ENCODE measurements at regions of chr1 and their contacts with region 1.

Region 1: GRCh38 chr1:174800216-174800851 is 199.4 kb upstream of the CACYBP start:
- DNase-seq: peak in 1 of 5 donors; percentile 47
- H3K4me3 ChIP-seq: peak overlapping the region; percentile 54 to 73
- H3K4me3 Mint-ChIP-seq: no peak overlapping the region
- H3K27ac ChIP-seq: peak overlapping the region; percentile 62
- H3K27ac Mint-ChIP-seq: no peak overlapping the region
- H3K4me1 ChIP-seq: peaks cover 24% of the 10 kb centered on the region
- H3K4me1 Mint-ChIP-seq: peaks cover 0 to 11% (median 9%) of the 10 kb centered on the region in 4 donors
- H3K27me3 ChIP-seq: no peaks in the 10 kb centered on the region
- H3K27me3 Mint-ChIP-seq: no peaks in the 10 kb centered on the region

Region 2: GRCh38 chr1:174692313-174692712 is 108.0 kb before region 1 on chr1:
- CTCF ChIA-PET with region 1: no interaction called
- POLR2A ChIA-PET with region 1: no interaction called
- intact Hi-C with region 1: no loop called
- DNase-seq: no peak
- H3K4me3 ChIP-seq: no peak overlapping the region
- H3K4me3 Mint-ChIP-seq: no peak overlapping the region
- H3K27ac ChIP-seq: no peak overlapping the region
- H3K27ac Mint-ChIP-seq: no peak overlapping the region
- H3K4me1 ChIP-seq: no peaks in the 10 kb centered on the region
- H3K4me1 Mint-ChIP-seq: no peaks in the 10 kb centered on the region
- H3K27me3 ChIP-seq: no peaks in the 10 kb centered on the region
- H3K27me3 Mint-ChIP-seq: no peaks in the 10 kb centered on the region

Region 3: GRCh38 chr1:174703309-174703708 is 97.0 kb before region 1 on chr1:
- CTCF ChIA-PET with region 1: no interaction called
- POLR2A ChIA-PET with region 1: no interaction called
- intact Hi-C with region 1: no loop called
- DNase-seq: no peak
- H3K4me3 ChIP-seq: no peak overlapping the region
- H3K4me3 Mint-ChIP-seq: no peak overlapping the region
- H3K27ac ChIP-seq: no peak overlapping the region
- H3K27ac Mint-ChIP-seq: no peak overlapping the region
- H3K4me1 ChIP-seq: no peaks in the 10 kb centered on the region
- H3K4me1 Mint-ChIP-seq: no peaks in the 10 kb centered on the region
- H3K27me3 ChIP-seq: no peaks in the 10 kb centered on the region
- H3K27me3 Mint-ChIP-seq: no peaks in the 10 kb centered on the region

Region 4: DNA sequence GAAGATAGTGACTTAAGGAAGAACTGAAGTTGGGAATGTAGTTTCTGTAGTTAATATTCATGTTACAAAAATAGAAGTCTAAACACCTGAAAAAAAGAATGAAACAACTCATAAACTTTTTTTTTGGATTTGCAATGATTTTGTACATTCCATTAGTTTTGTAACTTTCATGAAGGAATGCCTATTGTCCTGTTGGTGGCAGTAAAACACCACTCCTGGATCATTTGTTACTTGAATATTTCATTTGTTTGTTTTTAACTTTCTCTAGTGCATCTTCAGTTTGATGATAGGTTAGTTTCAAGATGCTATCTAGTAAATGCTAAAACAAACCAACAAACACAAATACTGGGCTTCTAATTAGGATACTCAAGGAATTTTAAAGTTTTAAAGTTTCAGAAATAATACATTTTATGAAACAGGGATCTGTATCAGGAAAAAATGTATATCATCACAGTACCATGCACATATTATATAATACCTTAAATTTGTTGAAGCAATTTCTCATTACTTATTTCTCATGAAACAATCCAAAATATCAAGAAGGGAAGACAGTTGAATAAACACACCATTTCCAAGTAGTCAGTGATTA is 30.3 kb before region 1 on chr1:
- CTCF ChIA-PET with region 1: no interaction called
- POLR2A ChIA-PET with region 1: no interaction called
- intact Hi-C with region 1: loop called (anchors 2 kb)
- DNase-seq: peak; percentile 34 to 55 (median 44)
- H3K4me3 ChIP-seq: no peak overlapping the region
- H3K4me3 Mint-ChIP-seq: no peak overlapping the region
- H3K27ac ChIP-seq: no peak overlapping the region
- H3K27ac Mint-ChIP-seq: no peak overlapping the region
- H3K4me1 ChIP-seq: no peaks in the 10 kb centered on the region
- H3K4me1 Mint-ChIP-seq: peaks cover 0 to 5% (median 2%) of the 10 kb centered on the region in 4 donors
- H3K27me3 ChIP-seq: no peaks in the 10 kb centered on the region
- H3K27me3 Mint-ChIP-seq: no peaks in the 10 kb centered on the region

Region 5: DNA sequence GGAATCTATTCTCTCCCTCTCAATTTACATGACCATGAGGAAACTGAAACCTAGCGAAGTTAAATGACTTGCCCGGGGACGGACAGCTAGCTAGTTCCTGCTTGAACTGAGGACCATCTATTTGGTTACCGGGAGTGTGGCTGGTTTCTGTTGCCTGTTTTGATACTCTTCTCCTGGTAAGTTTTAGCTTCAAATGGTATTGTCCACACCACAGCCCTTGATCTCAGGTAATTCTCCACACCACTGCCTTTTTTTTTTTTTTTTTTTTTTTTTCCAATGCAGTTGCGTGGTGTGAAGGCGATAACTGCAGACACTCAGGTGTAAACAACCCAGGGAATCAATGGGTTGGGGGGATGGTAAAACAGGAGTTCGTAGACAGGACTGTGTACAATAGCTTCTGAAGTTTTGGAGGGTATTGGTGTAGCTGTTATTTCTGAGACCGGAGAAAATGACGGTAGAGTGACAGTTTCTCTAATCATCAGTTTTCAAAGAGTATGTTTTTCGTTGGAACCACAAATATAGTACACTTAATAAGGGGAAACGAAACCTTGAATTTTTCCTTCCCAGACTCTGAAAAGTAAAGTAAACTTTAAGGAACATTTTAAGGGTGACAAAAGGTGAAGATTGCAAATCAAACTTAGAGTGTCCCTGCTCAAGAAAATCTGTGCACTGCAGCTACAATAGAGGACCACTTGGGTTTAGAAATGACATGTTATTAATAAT is 74.2 kb after region 1 on chr1:
- CTCF ChIA-PET with region 1: interaction called, 3 read pairs
- POLR2A ChIA-PET with region 1: interaction called, 20 read pairs
- intact Hi-C with region 1: no loop called
- DNase-seq: no peak
- H3K4me3 ChIP-seq: no peak overlapping the region
- H3K4me3 Mint-ChIP-seq: peak overlapping the region; percentile 78 to 89 (median 84)
- H3K27ac ChIP-seq: no peak overlapping the region
- H3K27ac Mint-ChIP-seq: peak overlapping the region; percentile 62 to 88 (median 77)
- H3K4me1 ChIP-seq: peaks cover 19% of the 10 kb centered on the region
- H3K4me1 Mint-ChIP-seq: peaks cover 12 to 38% (median 18%) of the 10 kb centered on the region in 4 donors
- H3K27me3 ChIP-seq: no peaks in the 10 kb centered on the region
- H3K27me3 Mint-ChIP-seq: no peaks in the 10 kb centered on the region

Region 6: DNA sequence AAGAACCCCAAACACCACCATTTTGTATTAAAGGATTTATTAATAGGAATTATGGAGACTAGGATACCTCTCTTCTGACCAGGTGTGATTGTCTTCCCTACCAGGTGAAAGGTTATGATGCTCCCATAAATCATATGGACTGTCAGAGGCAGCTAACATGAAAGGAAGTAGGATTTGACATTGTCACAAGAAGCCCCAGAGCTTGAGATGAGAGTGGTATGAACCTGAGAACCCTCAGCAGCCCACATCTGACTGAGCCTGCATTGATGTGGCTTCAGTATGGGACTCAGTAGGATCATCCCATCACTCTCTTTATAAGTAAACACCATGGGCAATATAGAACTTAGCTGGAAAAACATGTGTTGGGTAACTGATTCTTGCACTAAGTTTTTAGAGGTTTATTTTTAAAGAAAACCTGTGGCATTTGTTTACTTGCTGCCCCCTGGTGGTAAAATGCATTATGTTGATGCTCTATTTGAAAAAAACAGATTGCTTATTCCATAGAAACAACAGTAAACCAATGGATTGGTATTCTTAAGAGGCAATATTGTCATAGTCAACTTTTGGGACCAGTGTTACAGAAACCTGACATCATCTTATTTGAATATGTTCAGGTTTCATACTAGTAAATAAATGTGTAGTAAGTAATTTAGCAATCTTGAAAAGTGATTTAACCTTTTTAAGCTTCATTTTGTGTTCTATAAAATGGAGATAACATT is 182.8 kb after region 1 on chr1:
- CTCF ChIA-PET with region 1: interaction called, 23 read pairs
- POLR2A ChIA-PET with region 1: interaction called, 24 read pairs
- intact Hi-C with region 1: loop called (anchors 1 kb)
- DNase-seq: peak; percentile 59 to 70 (median 62)
- H3K4me3 ChIP-seq: no peak overlapping the region
- H3K4me3 Mint-ChIP-seq: no peak overlapping the region
- H3K27ac ChIP-seq: no peak overlapping the region
- H3K27ac Mint-ChIP-seq: peak overlapping the region in 5 of 7 donors; percentile 44 to 75 (median 59)
- H3K4me1 ChIP-seq: peaks cover 4% of the 10 kb centered on the region
- H3K4me1 Mint-ChIP-seq: peaks cover 13 to 28% (median 21%) of the 10 kb centered on the region in 4 donors
- H3K27me3 ChIP-seq: no peaks in the 10 kb centered on the region
- H3K27me3 Mint-ChIP-seq: no peaks in the 10 kb centered on the region

Region 7: GRCh38 chr1:174990382-174990999 is 190.2 kb after region 1 on chr1:
- CTCF ChIA-PET with region 1: interaction called, 23 read pairs
- POLR2A ChIA-PET with region 1: interaction called, 24 read pairs
- intact Hi-C with region 1: no loop called
- DNase-seq: peak in 3 of 5 donors; percentile 35 to 43 (median 39)
- H3K4me3 ChIP-seq: peak overlapping the region; percentile 10 to 49
- H3K4me3 Mint-ChIP-seq: peak overlapping the region; percentile 83 to 91 (median 90)
- H3K27ac ChIP-seq: peak overlapping the region; percentile 77
- H3K27ac Mint-ChIP-seq: peak overlapping the region; percentile 94 to 98 (median 96)
- H3K4me1 ChIP-seq: peaks cover 15% of the 10 kb centered on the region
- H3K4me1 Mint-ChIP-seq: peaks cover 23 to 24% (median 24%) of the 10 kb centered on the region in 4 donors
- H3K27me3 ChIP-seq: no peaks in the 10 kb centered on the region
- H3K27me3 Mint-ChIP-seq: no peaks in the 10 kb centered on the region

Region 8: GRCh38 chr1:175023043-175023921 is 222.9 kb after region 1 on chr1 and contains the start of gene MRPS14:
- CTCF ChIA-PET with region 1: no interaction called
- POLR2A ChIA-PET with region 1: interaction called, 24 read pairs
- intact Hi-C with region 1: no loop called
- DNase-seq: peak; percentile 95 to 98 (median 97)
- H3K4me3 ChIP-seq: peak within 1 kb of the TSS; percentile 79 to 97
- H3K4me3 Mint-ChIP-seq: peak within 1 kb of the TSS; percentile 90 to 98 (median 93)
- H3K27ac ChIP-seq: peak within 1 kb of the TSS; percentile 94
- H3K27ac Mint-ChIP-seq: peak within 1 kb of the TSS; percentile 86 to 97 (median 97)
- H3K4me1 ChIP-seq: peaks cover 25% of the 10 kb centered on the region
- H3K4me1 Mint-ChIP-seq: peaks cover 24 to 43% (median 28%) of the 10 kb centered on the region in 4 donors
- H3K27me3 ChIP-seq: no peaks in the 10 kb centered on the region
- H3K27me3 Mint-ChIP-seq: no peaks in the 10 kb centered on the region
- total RNA-seq, gene MRPS14: 39.3 to 40.6 TPM